GM12878 (cell line): ENCODE measurements at regions of chr3 and their contacts with region 1.

Region 1: DNA sequence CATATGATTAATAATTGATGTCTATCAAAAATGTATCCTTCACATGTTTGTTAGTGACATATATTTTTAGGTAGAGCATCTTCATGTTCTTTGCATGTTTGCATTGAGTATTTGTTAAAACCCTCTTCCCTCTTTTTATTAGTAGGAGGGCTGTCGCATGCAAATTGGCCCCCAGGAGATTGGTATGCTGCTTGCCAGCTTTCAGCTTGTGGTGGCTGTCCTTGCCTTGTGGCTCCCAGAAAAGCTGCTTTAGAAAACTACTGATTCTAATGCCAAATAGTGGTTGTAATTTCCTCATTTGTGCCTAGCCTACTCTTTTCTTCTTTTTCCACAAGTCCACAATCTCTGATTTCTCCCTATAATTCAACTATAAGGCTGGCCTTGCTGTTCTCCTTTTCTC is 886.8 kb downstream of the VGLL3 start:
- DNase-seq: no peak
- ATAC-seq: no peak
- H3K4me3 ChIP-seq: no peak overlapping the region
- H3K27ac ChIP-seq: no peak overlapping the region
- H3K4me1 ChIP-seq: no peaks in the 10 kb centered on the region
- H3K27me3 ChIP-seq: no peaks in the 10 kb centered on the region
- CTCF ChIP-seq: no peak
- EP300 ChIP-seq: no peak
- POLR2A ChIP-seq: no peak
- RAD21 ChIP-seq: no peak

Region 2: GRCh38 chr3:86087160-86087871 is 16.8 kb before region 1 on chr3:
- CTCF ChIA-PET with region 1: no interaction called
- POLR2A ChIA-PET with region 1: no interaction called
- RAD21 ChIA-PET with region 1: no interaction called
- SMC1A ChIA-PET with region 1: no interaction called
- in situ Hi-C with region 1: no loop called
- intact Hi-C with region 1: loop called (anchors 2 kb)
- DNase-seq: no peak
- ATAC-seq: no peak
- H3K4me3 ChIP-seq: no peak overlapping the region
- H3K27ac ChIP-seq: no peak overlapping the region
- H3K4me1 ChIP-seq: no peaks in the 10 kb centered on the region
- H3K27me3 ChIP-seq: no peaks in the 10 kb centered on the region
- CTCF ChIP-seq: no peak
- EP300 ChIP-seq: no peak
- POLR2A ChIP-seq: no peak
- RAD21 ChIP-seq: no peak

Region 3: DNA sequence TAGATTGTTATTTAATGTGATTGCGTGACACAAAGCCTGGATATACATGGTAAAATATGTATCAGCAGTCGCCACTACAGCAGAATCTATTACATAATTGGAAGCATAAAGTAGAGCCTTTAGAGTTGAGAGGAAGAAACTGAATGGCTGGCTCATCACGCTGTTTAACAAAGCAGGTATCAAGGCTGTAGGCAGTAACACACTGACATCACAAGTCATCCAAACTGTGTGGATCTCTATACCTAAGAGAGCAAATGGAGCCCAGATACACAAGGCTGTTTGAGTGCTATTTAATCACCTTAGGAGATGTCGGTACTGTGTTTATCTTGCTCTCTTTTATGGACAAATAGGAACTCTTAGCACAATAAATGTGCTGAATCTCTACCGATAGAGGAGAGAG is 22.4 kb after region 1 on chr3:
- CTCF ChIA-PET with region 1: no interaction called
- POLR2A ChIA-PET with region 1: no interaction called
- RAD21 ChIA-PET with region 1: no interaction called
- SMC1A ChIA-PET with region 1: no interaction called
- in situ Hi-C with region 1: no loop called
- intact Hi-C with region 1: no loop called
- DNase-seq: no peak
- ATAC-seq: no peak
- H3K4me3 ChIP-seq: no peak overlapping the region
- H3K27ac ChIP-seq: no peak overlapping the region
- H3K4me1 ChIP-seq: no peaks in the 10 kb centered on the region
- H3K27me3 ChIP-seq: no peaks in the 10 kb centered on the region
- CTCF ChIP-seq: no peak
- EP300 ChIP-seq: no peak
- POLR2A ChIP-seq: no peak
- RAD21 ChIP-seq: no peak

Region 4: DNA sequence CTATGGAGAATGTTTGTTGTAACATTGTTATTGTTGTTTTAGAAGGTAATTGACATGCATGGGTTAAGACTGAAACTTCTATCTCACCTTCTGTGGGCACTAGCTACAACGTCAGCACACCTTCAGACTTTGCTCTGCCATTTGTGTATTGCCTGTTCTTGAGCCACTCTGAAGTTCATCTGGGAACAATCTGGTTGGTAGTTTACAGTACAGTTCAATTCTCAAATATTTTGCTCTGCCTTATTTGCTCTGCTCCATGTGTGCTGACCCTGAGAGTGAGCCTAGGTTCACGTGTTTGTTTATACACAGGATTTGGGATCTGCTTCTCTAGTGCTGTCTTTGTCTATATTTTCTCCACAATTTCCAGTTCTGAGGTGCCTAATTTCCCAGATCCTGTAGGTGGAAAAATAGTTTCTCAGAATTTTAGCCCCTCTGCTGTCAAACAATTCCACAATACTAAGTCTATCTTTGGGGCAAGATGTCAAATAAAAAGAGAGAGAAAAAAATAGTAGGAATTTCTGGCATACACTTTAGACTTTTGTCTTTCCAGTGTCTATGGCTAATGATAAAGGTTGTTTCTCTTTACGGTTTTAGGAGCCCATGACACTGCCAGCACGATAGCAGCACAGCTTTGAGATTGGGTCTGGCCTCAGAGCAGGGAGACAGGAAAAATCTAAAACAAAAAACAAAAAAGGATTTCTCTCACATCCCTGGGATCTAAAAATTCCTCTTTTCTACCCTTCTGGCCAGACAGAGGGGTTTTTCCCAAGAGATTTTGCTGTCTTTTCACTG is 165.4 kb after region 1 on chr3:
- CTCF ChIA-PET with region 1: no interaction called
- POLR2A ChIA-PET with region 1: no interaction called
- RAD21 ChIA-PET with region 1: no interaction called
- SMC1A ChIA-PET with region 1: no interaction called
- in situ Hi-C with region 1: no loop called
- intact Hi-C with region 1: no loop called
- DNase-seq: no peak
- ATAC-seq: no peak
- H3K4me3 ChIP-seq: no peak overlapping the region
- H3K27ac ChIP-seq: no peak overlapping the region
- H3K4me1 ChIP-seq: no peaks in the 10 kb centered on the region
- H3K27me3 ChIP-seq: no peaks in the 10 kb centered on the region
- CTCF ChIP-seq: no peak
- EP300 ChIP-seq: no peak
- POLR2A ChIP-seq: no peak
- RAD21 ChIP-seq: no peak